ENCODE measurements at regions of chr19 and their contacts with region 1.

Region 1: DNA sequence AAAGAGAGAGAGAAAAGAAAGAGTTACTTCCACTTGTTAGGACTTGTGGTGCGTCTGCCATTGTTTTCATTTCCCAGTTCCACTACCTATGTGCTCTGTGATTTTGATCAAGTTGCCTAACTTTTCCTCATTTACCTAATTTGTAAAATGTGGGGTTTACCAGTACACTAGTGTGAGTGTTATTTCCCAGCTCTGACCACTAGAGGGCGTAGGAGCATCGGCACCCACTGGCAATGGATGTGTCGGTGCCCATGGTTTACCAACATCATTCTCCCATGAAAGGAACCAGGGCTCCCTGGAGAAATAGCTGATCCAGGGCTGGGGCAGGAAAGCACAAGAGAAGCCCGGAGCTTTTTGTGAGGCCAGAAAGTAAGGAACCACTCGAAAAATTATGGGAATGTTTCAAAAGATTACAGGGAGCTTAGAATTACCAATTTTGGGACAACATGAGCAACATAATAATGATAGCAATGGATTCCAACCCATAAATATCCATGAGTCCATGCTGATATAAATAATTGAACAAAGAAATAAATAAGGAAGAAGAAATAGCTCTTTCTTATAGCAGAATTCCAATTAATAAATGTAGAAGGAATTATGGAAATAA is 15.1 kb upstream of the CEACAM4 start:
- DNase-seq: peak; percentile 78 to 99
- ATAC-seq: peak; percentile 94 to 99
- H3K4me3 ChIP-seq: no peak overlapping the region
- H3K27ac ChIP-seq: no peak overlapping the region
- H3K4me1 ChIP-seq: no peaks in the 10 kb centered on the region
- CTCF ChIP-seq: peak; percentile 99
- EP300 ChIP-seq: no peak
- POLR2A ChIP-seq: no peak
- RAD21 ChIP-seq: peak; percentile 95 to 98

Region 2: GRCh38 chr19:41449079-41449864 is 192.7 kb before region 1 on chr19:
- CTCF ChIA-PET with region 1: interaction called, 18 read pairs
- POLR2A ChIA-PET with region 1: no interaction called
- DNase-seq: peak; percentile 84 to 98
- ATAC-seq: peak; percentile 89 to 97
- H3K4me3 ChIP-seq: peak overlapping the region; percentile 26
- H3K27ac ChIP-seq: peak overlapping the region in 1 of 2 experiments; percentile 5; a peak in 1 of 6 replicates
- H3K4me1 ChIP-seq: 0 out of 3 replicates have a peak, but pooled peaks cover 3% of the 10 kb centered on the region
- CTCF ChIP-seq: peak; percentile 100
- EP300 ChIP-seq: no peak
- POLR2A ChIP-seq: no peak
- RAD21 ChIP-seq: peak; percentile 99 to 100

Region 3: GRCh38 chr19:41531438-41532311 is 110.3 kb before region 1 on chr19:
- CTCF ChIA-PET with region 1: no interaction called
- POLR2A ChIA-PET with region 1: no interaction called
- DNase-seq: peak; percentile 85
- ATAC-seq: peak; percentile 73 to 86
- H3K4me3 ChIP-seq: peak overlapping the region; percentile 38
- H3K27ac ChIP-seq: no peak overlapping the region
- H3K4me1 ChIP-seq: peaks cover 7% of the 10 kb centered on the region; the same call in 2 of the 3 replicates
- CTCF ChIP-seq: no peak
- EP300 ChIP-seq: no peak
- POLR2A ChIP-seq: no peak
- RAD21 ChIP-seq: no peak

Region 4: GRCh38 chr19:41616792-41617621 is 25.0 kb before region 1 on chr19:
- CTCF ChIA-PET with region 1: interaction called, 10 read pairs
- POLR2A ChIA-PET with region 1: no interaction called
- DNase-seq: peak; percentile 44 to 49
- ATAC-seq: peak; percentile 44 to 63; a peak in 5 of 6 replicates
- H3K4me3 ChIP-seq: no peak overlapping the region
- H3K27ac ChIP-seq: no peak overlapping the region
- H3K4me1 ChIP-seq: no peaks in the 10 kb centered on the region
- CTCF ChIP-seq: no peak
- EP300 ChIP-seq: no peak
- POLR2A ChIP-seq: no peak
- RAD21 ChIP-seq: no peak

Region 5: DNA sequence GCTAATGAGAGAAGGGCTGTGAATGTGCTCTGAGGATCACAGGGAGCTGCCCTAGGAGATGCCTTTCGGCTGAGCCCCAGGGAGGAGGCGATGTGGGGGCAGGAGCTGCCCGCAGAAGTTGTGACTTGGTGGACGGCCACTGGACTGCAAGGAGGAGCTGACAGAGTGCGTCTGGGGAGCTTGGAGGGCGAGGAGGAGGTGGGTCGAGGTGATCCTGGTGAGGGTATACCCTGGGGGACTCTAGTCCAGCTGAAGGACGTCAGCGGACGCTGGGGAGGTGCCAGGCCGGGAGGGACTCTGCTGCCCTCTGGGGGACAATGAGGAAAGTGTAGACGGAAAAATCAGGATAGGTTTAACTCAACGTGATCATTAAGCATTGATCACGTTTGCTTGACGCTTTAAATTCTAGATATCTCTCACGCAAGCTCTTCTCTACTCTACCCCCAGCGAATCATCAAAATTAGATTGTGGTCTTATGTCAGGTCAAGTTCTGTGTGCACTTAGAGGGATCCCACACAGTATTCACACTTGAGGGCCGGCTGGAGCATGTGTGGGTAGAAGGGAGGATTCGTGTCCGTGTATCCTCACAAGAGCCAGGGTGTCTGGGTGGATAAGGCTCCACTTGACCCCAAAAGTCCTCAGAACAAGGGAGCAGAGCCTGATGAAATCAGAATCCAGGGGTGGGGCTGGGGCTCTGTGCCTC is 49.4 kb after region 1 on chr19:
- CTCF ChIA-PET with region 1: interaction called, 151 read pairs
- POLR2A ChIA-PET with region 1: no interaction called
- DNase-seq: peak; percentile 42 to 76
- ATAC-seq: peak; percentile 72 to 88
- H3K4me3 ChIP-seq: no peak overlapping the region
- H3K27ac ChIP-seq: no peak overlapping the region
- H3K4me1 ChIP-seq: no peaks in the 10 kb centered on the region
- CTCF ChIP-seq: peak; percentile 77
- EP300 ChIP-seq: no peak
- POLR2A ChIP-seq: no peak
- RAD21 ChIP-seq: peak; percentile 51 to 67; a peak in 4 of 5 replicates

Region 6: DNA sequence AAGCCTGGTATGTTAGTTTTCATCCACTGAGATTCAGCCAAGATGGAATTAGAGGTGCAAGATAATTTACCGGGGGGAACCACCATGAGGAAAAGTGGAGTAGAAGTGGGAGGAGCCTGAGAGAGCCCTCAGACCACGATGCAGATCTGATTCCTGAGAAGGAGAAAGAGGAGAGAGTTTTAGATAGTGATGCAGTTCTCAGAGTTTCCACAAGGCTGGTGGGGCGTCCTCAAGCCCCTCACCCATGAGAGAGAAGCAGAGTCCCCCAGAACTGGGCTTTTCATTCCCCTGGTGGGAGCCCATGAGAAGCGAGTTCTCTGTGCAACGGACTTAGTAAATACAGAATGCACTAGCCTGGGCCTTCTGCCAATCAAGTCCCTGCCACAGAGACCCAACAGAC is 84.5 kb after region 1 on chr19:
- CTCF ChIA-PET with region 1: interaction called, 24 read pairs
- POLR2A ChIA-PET with region 1: no interaction called
- DNase-seq: no peak
- ATAC-seq: peak in 1 of 2 experiments; percentile 43; a peak in 2 of 6 replicates
- H3K4me3 ChIP-seq: no peak overlapping the region
- H3K27ac ChIP-seq: no peak overlapping the region
- H3K4me1 ChIP-seq: no peaks in the 10 kb centered on the region
- CTCF ChIP-seq: no peak
- EP300 ChIP-seq: no peak
- POLR2A ChIP-seq: no peak
- RAD21 ChIP-seq: no peak

Region 7: DNA sequence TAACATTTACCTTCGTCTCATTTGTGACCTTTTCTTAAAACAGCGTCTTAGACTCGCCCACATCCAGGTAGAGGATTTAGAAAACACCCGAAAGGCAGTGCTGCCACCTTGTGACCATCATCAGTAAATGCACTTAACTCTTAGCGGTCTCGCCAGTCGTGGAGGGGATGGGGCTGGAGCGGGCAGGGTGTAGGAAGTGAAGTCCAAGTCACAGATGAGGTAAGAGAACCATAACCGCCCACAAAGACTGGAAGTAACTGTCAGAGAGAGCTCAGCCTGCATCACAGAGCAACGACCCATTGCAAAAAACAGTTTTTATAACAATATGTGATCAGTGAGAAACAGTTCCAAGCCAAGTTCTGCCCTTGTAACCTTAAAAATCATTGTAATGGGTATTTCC is 143.7 kb after region 1 on chr19:
- CTCF ChIA-PET with region 1: interaction called, 78 read pairs
- POLR2A ChIA-PET with region 1: no interaction called
- DNase-seq: peak; percentile 93 to 99
- ATAC-seq: peak; percentile 74 to 92
- H3K4me3 ChIP-seq: no peak overlapping the region
- H3K27ac ChIP-seq: no peak overlapping the region
- H3K4me1 ChIP-seq: peaks cover 5% of the 10 kb centered on the region; the same call in 1 of the 3 replicates
- CTCF ChIP-seq: peak; percentile 99
- EP300 ChIP-seq: no peak
- POLR2A ChIP-seq: no peak
- RAD21 ChIP-seq: peak; percentile 80 to 88

Region 8: DNA sequence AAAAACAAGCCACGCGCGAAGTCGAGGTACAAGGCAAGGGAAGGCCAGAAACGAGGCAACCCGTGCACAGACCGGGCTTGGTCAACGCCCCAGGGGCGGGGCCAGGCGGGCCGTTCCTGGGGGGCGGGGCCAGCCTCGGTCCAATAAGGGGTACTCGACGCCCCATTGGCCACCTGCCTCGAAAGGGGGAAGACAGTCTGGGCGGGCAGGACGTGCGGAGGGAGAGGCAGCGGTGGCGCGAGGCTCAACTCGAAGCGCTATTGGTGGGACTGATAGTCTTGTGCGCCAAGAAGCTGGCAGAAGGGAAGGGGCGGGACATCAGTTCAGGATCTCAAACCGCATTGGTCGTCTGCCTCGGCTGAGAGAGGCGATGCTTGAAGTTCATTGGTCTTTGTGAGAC is 202.6 kb after region 1 on chr19 and contains the start of gene LYPD4:
- CTCF ChIA-PET with region 1: interaction called, 12 read pairs
- POLR2A ChIA-PET with region 1: no interaction called
- DNase-seq: peak in 1 of 2 experiments; percentile 58
- ATAC-seq: peak; percentile 20 to 68; a peak in 4 of 6 replicates
- H3K4me3 ChIP-seq: no peak within 1 kb of the TSS
- H3K27ac ChIP-seq: no peak within 1 kb of the TSS
- H3K4me1 ChIP-seq: no peaks in the 10 kb centered on the region
- CTCF ChIP-seq: no peak
- EP300 ChIP-seq: no peak
- POLR2A ChIP-seq: no peak
- RAD21 ChIP-seq: no peak
- polyA plus RNA-seq, gene LYPD4: not detected in 2 replicates